ENCODE measurements at regions of chr4 and their contacts with region 1.

Region 1: DNA sequence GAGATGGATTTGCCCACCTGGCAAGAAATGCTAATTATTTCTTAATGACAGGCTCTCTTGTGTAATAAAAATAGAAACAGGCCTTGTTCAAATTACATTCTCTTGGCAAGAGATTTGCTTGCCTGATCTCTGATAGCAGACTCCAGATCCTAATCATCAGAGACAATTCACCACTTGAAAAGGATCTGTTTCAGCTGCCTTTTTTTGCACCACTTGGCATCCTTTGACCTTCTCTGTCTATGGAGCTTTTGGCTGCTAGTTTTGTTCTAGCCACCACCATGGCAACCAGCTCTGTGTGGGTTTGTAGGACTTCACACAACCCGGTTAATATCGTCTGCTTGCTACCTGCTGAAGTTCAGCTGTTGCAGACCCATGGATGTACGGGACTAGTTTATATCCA is 241.1 kb upstream of the TLL1 start:
- DNase-seq: no peak
- ATAC-seq: peak in 4 of 8 donors; percentile 53 to 87 (median 58)
- H3K4me3 ChIP-seq: no peak overlapping the region
- H3K27ac ChIP-seq: peak overlapping the region in 1 of 10 donors; percentile 21
- H3K4me1 ChIP-seq: peaks cover 0 to 19% (median 3%) of the 10 kb centered on the region in 9 donors
- H3K27me3 ChIP-seq: no peaks in the 10 kb centered on the region
- CTCF ChIP-seq: no peak

Region 2: DNA sequence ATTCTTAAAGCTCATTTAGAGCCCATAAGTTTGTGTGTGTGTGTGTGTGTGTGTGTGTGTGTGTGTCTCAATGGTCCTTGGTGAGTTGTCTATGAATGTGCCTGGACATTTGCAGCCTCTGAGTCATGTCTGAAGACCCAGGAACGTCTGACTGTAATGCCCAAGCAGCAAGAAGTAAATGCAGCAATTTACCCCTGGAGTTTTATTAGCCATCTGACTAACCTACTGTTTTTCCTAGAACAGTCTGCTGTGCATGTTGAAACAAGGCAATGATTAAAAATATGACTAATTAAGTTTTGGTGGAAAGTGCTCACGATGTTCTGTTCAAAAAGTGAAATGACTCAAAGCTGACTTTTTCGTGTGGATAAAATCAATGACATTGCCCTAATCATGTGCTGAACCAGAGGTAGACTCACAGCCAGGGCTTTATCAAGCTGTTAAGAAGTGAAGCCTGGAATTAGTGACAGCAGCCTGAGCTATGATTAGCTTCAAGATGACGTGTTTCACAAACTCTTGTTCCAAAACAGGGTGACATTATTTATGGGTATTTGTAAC is 51.5 kb before region 1 on chr4:
- intact Hi-C with region 1: loop called in 2 of 10 experiments (anchors 2 to 5 kb)
- DNase-seq: peak in 1 of 2 donors; percentile 10
- ATAC-seq: peak in 7 of 8 donors; percentile 78 to 99 (median 96)
- H3K4me3 ChIP-seq: no peak overlapping the region
- H3K27ac ChIP-seq: peak overlapping the region in 9 of 10 donors; percentile 22 to 78 (median 51)
- H3K4me1 ChIP-seq: peaks cover 0 to 13% (median 7%) of the 10 kb centered on the region in 9 donors
- H3K27me3 ChIP-seq: no peaks in the 10 kb centered on the region
- CTCF ChIP-seq: no peak

Measured in heart right ventricle (tissue), 16 donors.